ENCODE measurements at regions of chr2 and their contacts with region 1.

Region 1: DNA sequence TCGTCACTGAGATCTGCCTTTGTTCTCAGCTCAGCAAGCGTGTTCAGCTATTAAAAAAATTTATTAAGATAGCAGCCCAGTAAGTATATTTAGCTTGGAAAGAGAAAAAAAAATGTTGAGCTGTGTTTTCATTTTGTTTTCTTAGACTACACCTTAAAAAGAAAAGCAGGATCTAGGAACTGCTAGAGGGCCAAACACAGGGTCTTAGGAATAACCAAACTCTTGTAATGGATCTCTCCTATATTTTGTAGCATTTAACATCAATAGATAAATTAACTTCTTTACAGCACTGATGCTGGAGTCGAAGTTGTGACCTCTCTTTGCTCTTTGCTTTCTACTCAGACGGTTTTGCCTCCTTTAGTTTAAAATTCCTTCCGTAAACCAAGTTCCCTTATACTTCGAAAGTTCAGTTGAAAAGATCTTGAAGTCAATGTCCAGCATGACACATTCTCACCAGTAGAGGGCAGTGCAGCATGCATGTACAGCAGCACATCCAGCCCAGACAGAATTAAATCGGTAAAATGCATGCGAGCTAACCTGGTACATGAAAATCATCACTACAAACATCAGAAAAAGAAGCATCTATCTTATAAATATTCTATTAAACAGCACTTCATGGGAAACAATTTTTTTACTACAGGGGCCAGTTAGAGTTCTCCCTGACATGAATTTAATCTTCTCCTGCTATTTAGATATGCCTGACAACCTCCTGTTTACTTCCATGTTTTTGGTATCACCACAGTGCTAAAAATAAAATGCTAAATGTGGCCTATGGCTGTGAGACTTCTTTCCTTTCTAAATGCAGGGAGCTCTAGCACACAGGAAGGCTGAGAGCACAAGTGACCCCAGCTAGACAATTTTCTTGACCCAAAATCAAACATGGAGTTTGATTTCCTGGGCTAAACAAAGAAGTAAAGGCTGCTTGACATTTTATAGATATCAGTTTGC is 48.2 kb upstream of the MAP3K20 start:
- DNase-seq: peak; percentile 69 to 89
- ATAC-seq: peak; percentile 74

Region 2: GRCh38 chr2:172985139-172985901 is 42.1 kb before region 1 on chr2:
- intact Hi-C with region 1: no loop called
- DNase-seq: no peak
- ATAC-seq: no peak

Region 3: GRCh38 chr2:173210270-173211196 is 183.1 kb after region 1 on chr2:
- intact Hi-C with region 1: loop called (anchors 5 kb)
- DNase-seq: peak; percentile 47 to 51
- ATAC-seq: peak; percentile 82

Measured in left colon (tissue), 2 donors.